ENCODE measurements at regions of chr20 and their contacts with region 1.

Region 1: GRCh38 chr20:24694727-24695597 is 225.5 kb downstream of the SYNDIG1 start:
- DNase-seq: no peak
- ATAC-seq: no peak; a peak in 1 of 6 replicates
- H3K4me3 ChIP-seq: no peak overlapping the region
- H3K27ac ChIP-seq: no peak overlapping the region
- H3K4me1 ChIP-seq: no peaks in the 10 kb centered on the region
- CTCF ChIP-seq: no peak
- EP300 ChIP-seq: no peak
- POLR2A ChIP-seq: no peak
- RAD21 ChIP-seq: no peak

Region 2: GRCh38 chr20:24705486-24705885 is 10.5 kb after region 1 on chr20:
- CTCF ChIA-PET with region 1: interaction called, 15 read pairs
- POLR2A ChIA-PET with region 1: no interaction called
- DNase-seq: no peak
- ATAC-seq: no peak
- H3K4me3 ChIP-seq: no peak overlapping the region
- H3K27ac ChIP-seq: no peak overlapping the region
- H3K4me1 ChIP-seq: no peaks in the 10 kb centered on the region
- CTCF ChIP-seq: no peak
- EP300 ChIP-seq: no peak
- POLR2A ChIP-seq: no peak
- RAD21 ChIP-seq: 0 out of 5 replicates have a peak, but pooled peaks of 1 of the 2 experiments have one; percentile 16

Region 3: DNA sequence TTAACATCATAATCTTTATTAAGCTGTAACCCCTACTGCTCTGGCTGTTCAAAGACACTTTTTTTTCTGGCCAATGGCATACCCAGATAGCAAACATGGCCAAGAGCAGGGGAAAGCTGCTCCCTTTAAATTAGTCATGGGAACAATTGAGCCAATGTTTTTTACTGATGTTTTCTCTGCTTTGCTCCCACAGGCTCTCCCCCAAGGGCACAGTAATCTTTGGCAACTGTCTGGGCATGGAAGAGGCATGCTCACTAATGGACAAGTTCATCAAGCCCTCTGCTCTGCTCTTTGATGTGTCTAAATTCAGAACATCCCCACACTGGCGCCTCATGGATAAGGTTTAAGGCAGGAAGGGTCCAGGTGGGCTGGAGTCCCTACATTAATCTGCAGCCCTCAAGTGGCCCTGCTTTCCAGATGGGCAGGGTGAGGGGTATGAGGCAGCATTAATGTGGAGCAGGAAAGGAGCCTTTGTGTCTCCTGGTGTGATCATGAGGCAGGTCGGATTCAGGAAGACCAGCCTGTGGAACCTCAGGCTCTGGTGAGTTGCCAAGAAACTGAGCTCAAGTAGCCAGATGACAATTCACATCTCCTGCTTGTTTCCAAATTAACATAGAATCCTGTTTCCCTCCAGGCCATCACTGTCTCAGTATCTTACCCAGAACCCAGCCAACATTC is 27.1 kb after region 1 on chr20:
- CTCF ChIA-PET with region 1: no interaction called
- POLR2A ChIA-PET with region 1: no interaction called
- DNase-seq: no peak
- ATAC-seq: no peak
- H3K4me3 ChIP-seq: no peak overlapping the region
- H3K27ac ChIP-seq: no peak overlapping the region
- H3K4me1 ChIP-seq: no peaks in the 10 kb centered on the region; the same call in 2 of the 3 replicates
- CTCF ChIP-seq: no peak
- EP300 ChIP-seq: no peak
- POLR2A ChIP-seq: no peak
- RAD21 ChIP-seq: no peak